ENCODE measurements at regions of chr1 and their contacts with region 1.

Region 1: DNA sequence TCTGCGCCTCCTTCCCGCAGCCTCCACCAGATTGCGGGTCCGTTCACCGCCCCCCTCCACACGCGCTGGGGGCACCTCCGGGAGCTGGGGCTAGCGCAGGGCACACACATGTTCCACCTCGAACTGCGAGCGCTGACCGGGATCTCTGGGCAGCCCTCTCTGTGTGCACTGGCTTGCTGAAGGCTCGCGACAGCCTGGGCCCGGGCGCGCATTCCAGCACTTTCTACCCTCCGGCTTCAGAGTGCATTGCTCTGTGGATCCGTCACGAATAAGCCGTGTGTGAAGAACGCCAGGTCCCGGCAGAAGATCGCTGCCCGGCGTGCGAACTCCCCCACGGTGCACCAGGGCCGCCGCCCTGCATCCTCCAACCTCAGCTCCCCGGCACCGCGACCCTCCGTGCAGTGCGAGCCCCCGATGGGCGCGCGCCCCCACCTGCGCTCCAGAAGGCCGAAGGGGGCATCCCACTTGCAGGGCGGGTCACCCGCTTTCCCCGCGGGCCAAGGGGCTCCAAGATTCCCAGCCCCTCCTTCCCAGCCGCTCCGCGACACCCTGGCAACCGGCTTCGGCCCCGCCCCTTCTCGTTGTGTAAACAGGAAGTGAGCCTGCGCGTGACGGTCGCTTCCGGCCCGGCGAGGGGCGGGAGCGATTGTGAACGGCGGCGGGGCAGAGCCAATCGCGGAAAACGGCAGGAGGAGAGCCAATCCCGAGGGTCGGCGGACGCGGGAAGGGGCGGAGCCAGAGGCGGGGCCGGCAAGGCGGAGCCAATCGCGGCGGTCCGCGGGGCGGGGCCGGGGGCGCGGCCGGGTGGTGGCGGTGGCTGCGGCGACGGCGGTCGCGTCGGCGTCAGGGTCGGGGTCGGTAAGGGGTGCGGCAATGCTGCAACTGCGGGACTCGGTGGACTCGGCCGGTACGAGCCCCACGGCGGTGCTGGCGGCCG is at the start of gene TPRG1L:
- DNase-seq: peak; percentile 96 to 97
- ATAC-seq: peak; percentile 97 to 98
- H3K4me3 ChIP-seq: peak within 1 kb of the TSS; percentile 91 to 100 (median 96)
- H3K27ac ChIP-seq: peak within 1 kb of the TSS; percentile 59 to 91 (median 83)
- H3K4me1 ChIP-seq: peaks cover 21 to 23% of the 10 kb centered on the region in 2 donors
- H3K27me3 ChIP-seq: no peaks in the 10 kb centered on the region
- CTCF ChIP-seq: no peak
- POLR2A ChIP-seq: peak; percentile 49 to 67
- total RNA-seq, gene TPRG1L: 25.3 to 38.7 (median 30.0) TPM

Region 2: GRCh38 chr1:3483801-3484444 is 140.5 kb before region 1 on chr1:
- in situ Hi-C with region 1: loop called (anchors 5 to 10 kb)
- intact Hi-C with region 1: no loop called
- DNase-seq: no peak
- ATAC-seq: peak; percentile 48 to 73
- H3K4me3 ChIP-seq: no peak overlapping the region
- H3K27ac ChIP-seq: no peak overlapping the region
- H3K4me1 ChIP-seq: no peaks in the 10 kb centered on the region
- H3K27me3 ChIP-seq: peaks cover 0 to 5% (median 0%) of the 10 kb centered on the region in 3 donors
- CTCF ChIP-seq: peak; percentile 73 to 94 (median 90)
- POLR2A ChIP-seq: no peak

Region 3: GRCh38 chr1:3649342-3650247 is 25.1 kb after region 1 on chr1 and contains the start of gene WRAP73:
- in situ Hi-C with region 1: no loop called
- intact Hi-C with region 1: loop called (anchors 1 kb)
- DNase-seq: peak; percentile 77 to 83
- ATAC-seq: peak; percentile 93 to 98
- H3K4me3 ChIP-seq: peak within 1 kb of the TSS; percentile 78 to 93 (median 90)
- H3K27ac ChIP-seq: peak within 1 kb of the TSS; percentile 37 to 78 (median 60)
- H3K4me1 ChIP-seq: peaks cover 11 to 21% of the 10 kb centered on the region in 2 donors
- H3K27me3 ChIP-seq: peaks cover 38 to 41% (median 39%) of the 10 kb centered on the region in 3 donors
- CTCF ChIP-seq: no peak
- POLR2A ChIP-seq: peak; percentile 69 to 76
- total RNA-seq, gene WRAP73: 12.7 to 16.1 (median 14.2) TPM